Astrocyte of the cerebellum (primary cell): ENCODE measurements at regions of chr12 and their contacts with region 1.

Region 1: DNA sequence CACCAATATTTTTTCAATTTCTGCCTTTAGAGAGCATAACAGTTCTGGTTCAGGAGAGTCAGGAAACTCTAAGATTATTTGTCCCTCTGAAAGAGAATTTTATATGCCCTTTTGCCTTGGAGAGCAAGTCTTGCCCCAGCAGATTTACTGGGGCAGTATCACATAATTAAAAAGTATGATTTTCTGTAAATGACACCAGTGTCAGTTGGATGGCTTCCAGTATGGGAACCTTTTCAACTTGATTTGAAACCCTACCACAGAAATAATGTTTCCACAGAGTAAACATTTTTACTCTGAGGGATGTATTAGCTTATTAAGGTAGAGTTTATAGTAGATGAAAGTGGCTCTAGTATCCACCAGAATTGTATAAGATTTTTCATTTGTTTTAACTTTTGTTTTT is 15.4 kb downstream of the NOPCHAP1 start:
- DNase-seq: no peak
- H3K4me3 ChIP-seq: no peak overlapping the region
- CTCF ChIP-seq: no peak

Region 2: DNA sequence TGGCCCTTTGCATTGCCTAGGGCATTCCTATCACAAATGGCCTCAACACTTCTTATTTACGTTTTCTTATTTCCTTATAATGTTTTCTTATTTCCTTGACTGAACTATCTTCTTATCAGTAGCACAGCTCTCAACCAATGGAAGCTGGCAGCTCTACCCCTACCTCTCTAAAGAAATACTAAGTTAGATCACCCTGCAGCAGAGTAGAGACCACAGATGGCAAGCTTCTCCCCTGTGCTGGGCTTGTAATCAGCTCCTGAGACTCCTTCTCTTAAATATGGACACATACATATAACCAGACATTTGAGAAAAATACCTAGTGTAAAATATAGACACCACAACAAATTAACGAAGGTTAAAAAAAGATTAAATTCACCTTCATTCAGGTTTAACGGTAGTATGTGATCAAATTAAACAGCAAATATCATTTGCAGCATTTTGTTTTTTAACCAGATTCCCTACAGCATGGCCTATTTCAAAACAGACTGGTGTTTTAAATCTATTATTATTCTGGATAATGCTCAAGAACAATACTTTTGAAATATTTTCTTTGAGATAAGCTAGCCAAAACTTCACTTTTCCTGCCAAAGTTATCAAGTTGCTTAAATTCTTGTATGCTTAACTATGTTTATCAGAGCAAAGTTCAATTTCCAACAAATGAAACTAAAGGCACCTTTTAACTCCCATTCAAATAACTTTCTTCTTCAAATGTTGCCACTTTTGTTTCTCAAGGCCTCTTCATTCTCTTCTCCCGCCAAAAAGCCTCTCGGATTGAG is 97.6 kb before region 1 on chr12:
- in situ Hi-C with region 1: loop called (anchors 5 kb)
- DNase-seq: peak; percentile 63
- H3K4me3 ChIP-seq: no peak overlapping the region
- CTCF ChIP-seq: no peak